ENCODE measurements at regions of chr7 and their contacts with region 1.

Region 1: DNA sequence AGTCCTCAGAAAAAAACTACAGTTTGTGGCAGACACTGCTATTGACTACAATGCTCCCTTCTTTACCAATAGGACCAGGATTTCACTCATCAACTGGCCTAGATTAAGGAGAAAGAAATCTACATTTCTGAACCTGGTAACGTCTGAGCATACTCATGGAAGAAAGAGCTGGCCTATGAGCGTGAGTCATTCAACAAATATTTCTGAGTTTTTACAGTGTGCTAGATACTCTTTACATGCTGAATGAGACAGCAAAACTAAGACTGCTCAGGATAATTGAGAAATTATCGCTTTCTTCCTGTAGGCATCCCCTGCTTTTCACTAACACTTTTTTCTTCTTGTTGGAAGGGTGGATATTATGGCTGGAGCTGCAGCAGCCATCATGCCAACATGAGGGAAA is 609.7 kb downstream of the TNS3 start:
- DNase-seq: no peak
- ATAC-seq: no peak
- H3K4me3 ChIP-seq: no peak overlapping the region
- H3K27ac ChIP-seq: no peak overlapping the region
- H3K4me1 ChIP-seq: no peaks in the 10 kb centered on the region
- H3K27me3 ChIP-seq: no peaks in the 10 kb centered on the region
- CTCF ChIP-seq: no peak

Region 2: DNA sequence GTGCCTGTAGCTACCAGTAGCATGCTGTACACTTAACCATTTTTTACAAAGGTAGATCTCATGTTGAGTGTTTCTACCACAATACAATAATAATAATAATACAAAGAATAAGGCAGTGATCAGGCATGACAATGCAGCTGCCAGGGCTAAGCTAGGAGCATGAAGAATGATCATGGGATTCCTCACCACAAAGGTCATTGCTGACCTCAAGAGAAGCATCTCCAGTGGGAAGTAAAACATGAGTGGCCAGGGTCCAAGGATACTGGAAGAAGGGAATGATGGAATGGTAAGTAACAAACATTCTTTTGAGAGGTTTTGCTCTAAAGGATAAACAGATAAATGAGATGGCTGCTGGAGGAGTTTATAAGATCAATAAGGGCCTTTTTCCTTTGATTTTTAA is 18.6 kb after region 1 on chr7:
- intact Hi-C with region 1: loop called in 1 of 2 experiments (anchors 1 kb)
- DNase-seq: no peak
- ATAC-seq: no peak
- H3K4me3 ChIP-seq: no peak overlapping the region
- H3K27ac ChIP-seq: no peak overlapping the region
- H3K4me1 ChIP-seq: no peaks in the 10 kb centered on the region
- H3K27me3 ChIP-seq: no peaks in the 10 kb centered on the region
- CTCF ChIP-seq: no peak

Measured in psoas muscle (tissue), 8 donors.